ENCODE measurements at regions of chr17 and their contacts with region 1.

Region 1: DNA sequence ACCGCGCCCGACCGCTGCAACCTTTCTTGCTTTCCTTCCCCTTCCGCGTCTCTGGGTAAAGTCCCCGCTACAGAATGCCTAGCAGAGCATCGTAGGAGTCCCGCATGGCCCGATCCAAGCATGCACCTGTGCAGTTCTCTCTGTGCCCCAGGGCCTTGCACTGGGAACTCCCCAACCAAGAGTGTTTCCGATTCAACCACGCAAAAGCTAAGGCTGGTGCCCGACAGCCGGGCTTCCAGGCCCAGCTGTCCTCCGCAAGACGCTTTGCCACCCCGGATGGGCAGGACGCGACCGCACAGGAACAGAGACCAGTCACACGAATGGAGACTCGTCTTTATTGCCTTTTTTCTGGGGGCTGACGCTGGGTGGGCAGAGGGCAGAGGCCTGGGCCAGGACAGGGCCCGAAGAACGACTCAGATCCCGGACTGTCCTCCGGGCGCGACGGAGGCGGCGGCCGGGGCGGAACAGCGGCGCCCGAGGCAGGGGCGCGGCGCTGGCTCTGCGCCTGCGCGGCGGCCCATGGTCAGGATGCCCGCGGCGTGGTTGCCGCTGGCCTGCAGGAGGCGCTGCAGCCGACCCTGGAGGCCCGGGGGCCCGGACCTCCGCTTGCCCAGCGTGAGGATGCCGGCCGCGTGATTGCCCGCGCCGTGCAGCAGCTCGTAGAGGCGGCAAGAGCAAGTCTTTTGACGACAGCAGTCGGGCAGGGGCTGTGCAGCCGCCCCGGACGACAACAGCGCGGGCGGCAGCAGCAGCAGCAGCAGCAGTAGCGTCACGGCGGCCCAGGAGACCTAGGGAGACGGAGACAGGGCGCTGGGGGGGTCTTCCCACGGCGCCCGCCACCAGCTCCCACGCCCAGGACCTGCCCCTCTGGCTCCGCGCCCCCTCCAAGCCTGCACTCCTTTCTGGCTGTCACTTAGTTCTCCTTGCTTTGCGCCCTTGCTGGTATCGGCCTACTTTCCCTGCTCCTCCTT is 1.2 kb downstream of the HCRT start:
- DNase-seq: peak; percentile 67 to 92 (median 80)
- ATAC-seq: peak; percentile 41 to 89 (median 82)
- H3K4me3 ChIP-seq: peak overlapping the region; percentile 27 to 72 (median 61)
- H3K27ac ChIP-seq: peak overlapping the region in 11 of 12 donors; percentile 67 to 88 (median 80)
- H3K4me1 ChIP-seq: peaks cover 0 to 53% (median 27%) of the 10 kb centered on the region in 12 donors
- H3K27me3 ChIP-seq: peaks cover 0 to 28% (median 14%) of the 10 kb centered on the region in 9 donors
- CTCF ChIP-seq: peak; percentile 66 to 98 (median 88)
- POLR2A ChIP-seq: peak in 1 of 2 donors; percentile 65

Region 2: GRCh38 chr17:42120770-42121769 is 63.0 kb before region 1 on chr17 and contains the start of gene KAT2A:
- intact Hi-C with region 1: loop called in 5 of 10 experiments (anchors 2 to 5 kb)
- DNase-seq: peak; percentile 83 to 91 (median 86)
- ATAC-seq: peak; percentile 73 to 93 (median 92)
- H3K4me3 ChIP-seq: peak within 1 kb of the TSS; percentile 43 to 97 (median 78)
- H3K27ac ChIP-seq: peak within 1 kb of the TSS in 11 of 12 donors; percentile 24 to 80 (median 71)
- H3K4me1 ChIP-seq: peaks cover 0 to 29% (median 16%) of the 10 kb centered on the region in 12 donors
- H3K27me3 ChIP-seq: no peaks in the 10 kb centered on the region
- CTCF ChIP-seq: no peak
- POLR2A ChIP-seq: peak in 1 of 2 donors; percentile 51
- total RNA-seq, gene KAT2A: 6.9 to 17.6 (median 14.8) TPM

Region 3: DNA sequence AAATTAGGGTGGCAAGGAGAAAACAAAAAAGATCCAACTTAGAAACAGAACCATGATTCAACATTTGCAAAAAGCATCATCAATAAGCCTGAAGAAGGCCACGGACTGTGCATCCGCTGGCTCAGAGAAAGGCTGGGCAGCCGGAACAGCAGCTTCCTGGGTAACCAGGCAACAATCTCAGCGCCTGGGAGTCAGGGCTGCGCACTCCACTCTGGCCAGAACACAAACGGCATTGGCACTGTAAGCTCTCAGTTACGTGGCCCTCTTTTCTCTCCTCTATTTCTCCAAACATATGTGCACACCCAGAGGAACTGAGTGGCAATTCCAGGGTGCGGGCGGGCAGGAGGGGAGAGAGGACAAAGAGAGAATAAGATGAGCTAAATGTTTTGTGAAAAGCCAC is 16.7 kb after region 1 on chr17:
- intact Hi-C with region 1: no loop called
- DNase-seq: peak; percentile 57 to 82 (median 73)
- ATAC-seq: peak; percentile 88 to 96 (median 96)
- H3K4me3 ChIP-seq: no peak overlapping the region
- H3K27ac ChIP-seq: peak overlapping the region in 7 of 12 donors; percentile 12 to 50 (median 24)
- H3K4me1 ChIP-seq: peaks cover 0 to 14% (median 9%) of the 10 kb centered on the region in 12 donors
- H3K27me3 ChIP-seq: no peaks in the 10 kb centered on the region
- CTCF ChIP-seq: no peak
- POLR2A ChIP-seq: no peak

Region 4: GRCh38 chr17:42276359-42276608 is 92.3 kb after region 1 on chr17 and contains the start of gene STAT5B:
- intact Hi-C with region 1: loop called in 2 of 10 experiments (anchors 2 to 10 kb)
- DNase-seq: peak; percentile 72 to 89 (median 80)
- ATAC-seq: peak; percentile 40 to 90 (median 83)
- H3K4me3 ChIP-seq: peak within 1 kb of the TSS; percentile 70 to 99 (median 90)
- H3K27ac ChIP-seq: peak within 1 kb of the TSS; percentile 72 to 94 (median 90)
- H3K4me1 ChIP-seq: peaks cover 0 to 50% (median 25%) of the 10 kb centered on the region in 12 donors
- H3K27me3 ChIP-seq: no peaks in the 10 kb centered on the region
- CTCF ChIP-seq: no peak
- POLR2A ChIP-seq: peak in 1 of 2 donors; percentile 45
- total RNA-seq, gene STAT5B: 26.1 to 51.9 (median 32.4) TPM

Region 5: DNA sequence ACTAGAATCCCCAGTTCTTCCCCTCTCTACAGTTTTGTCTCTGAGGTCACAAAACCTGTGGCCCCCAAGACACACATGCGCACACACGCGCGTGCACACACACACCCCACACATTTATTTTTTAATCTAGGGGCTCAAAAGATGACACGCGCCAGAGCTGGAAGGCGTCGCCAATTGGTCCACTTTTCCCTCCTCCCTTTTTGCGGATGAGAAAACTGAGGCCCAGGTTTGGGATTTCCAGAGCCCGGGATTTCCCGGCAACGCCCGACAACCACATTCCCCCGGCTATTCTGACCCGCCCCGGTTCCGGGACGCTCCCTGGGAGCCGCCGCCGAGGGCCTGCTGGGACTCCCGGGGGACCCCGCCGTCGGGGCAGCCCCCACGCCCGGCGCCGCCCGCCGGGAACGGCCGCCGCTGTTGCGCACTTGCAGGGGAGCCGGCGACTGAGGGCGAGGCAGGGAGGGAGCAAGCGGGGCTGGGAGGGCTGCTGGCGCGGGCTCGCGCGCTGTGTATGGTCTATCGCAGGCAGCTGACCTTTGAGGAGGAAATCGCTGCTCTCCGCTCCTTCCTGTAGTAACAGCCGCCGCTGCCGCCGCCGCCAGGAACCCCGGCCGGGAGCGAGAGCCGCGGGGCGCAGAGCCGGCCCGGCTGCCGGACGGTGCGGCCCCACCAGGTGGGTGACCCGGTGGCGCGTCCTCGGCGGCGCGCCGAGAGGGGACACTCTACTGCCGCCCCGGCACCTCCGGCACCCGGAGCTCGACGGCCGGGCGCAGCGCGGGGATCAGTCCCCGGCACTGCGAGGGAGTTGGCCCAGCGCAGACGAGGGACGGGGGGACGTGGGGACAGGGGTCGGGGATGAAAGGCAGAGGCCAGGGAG is 104.1 kb after region 1 on chr17 and contains the start of gene STAT5A:
- intact Hi-C with region 1: no loop called
- DNase-seq: peak; percentile 92 to 95 (median 94)
- ATAC-seq: peak; percentile 82 to 94 (median 92)
- H3K4me3 ChIP-seq: peak within 1 kb of the TSS; percentile 58 to 93 (median 72)
- H3K27ac ChIP-seq: peak within 1 kb of the TSS; percentile 79 to 97 (median 91)
- H3K4me1 ChIP-seq: peaks cover 0 to 61% (median 29%) of the 10 kb centered on the region in 12 donors
- H3K27me3 ChIP-seq: no peaks in the 10 kb centered on the region
- CTCF ChIP-seq: peak in 1 of 12 donors; percentile 5
- POLR2A ChIP-seq: peak in 1 of 2 donors; percentile 83
- total RNA-seq, gene STAT5A: 7.5 to 44.0 (median 15.7) TPM

Region 6: DNA sequence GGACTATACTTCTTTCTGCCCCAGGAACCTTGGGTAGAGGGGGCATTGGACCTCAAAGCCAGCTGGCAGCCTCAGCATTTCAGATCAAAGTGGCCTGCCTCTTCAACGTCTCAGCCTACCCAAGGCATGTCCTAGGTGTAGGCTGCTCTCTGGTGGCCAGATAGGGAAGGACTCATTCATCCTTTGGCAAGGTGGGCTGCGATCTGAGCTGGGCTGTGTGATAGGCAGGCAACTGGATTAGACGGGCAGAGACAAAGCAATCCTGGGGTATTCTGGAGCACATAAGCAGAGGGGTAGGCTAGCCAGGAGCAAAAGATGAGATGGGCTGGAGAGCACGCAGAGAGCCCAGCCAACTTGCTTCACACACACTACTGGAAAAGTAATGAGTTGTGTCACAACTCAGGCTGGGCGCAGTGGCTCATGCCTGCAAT is 343.3 kb after region 1 on chr17:
- intact Hi-C with region 1: loop called in 2 of 10 experiments (anchors 5 kb)
- DNase-seq: peak in 4 of 5 donors; percentile 73 to 75 (median 74)
- ATAC-seq: peak; percentile 51 to 84 (median 82)
- H3K4me3 ChIP-seq: no peak overlapping the region
- H3K27ac ChIP-seq: peak overlapping the region in 8 of 12 donors; percentile 54 to 97 (median 74)
- H3K4me1 ChIP-seq: peaks cover 0 to 51% (median 32%) of the 10 kb centered on the region in 12 donors
- H3K27me3 ChIP-seq: no peaks in the 10 kb centered on the region
- CTCF ChIP-seq: peak; percentile 72 to 87 (median 81)
- POLR2A ChIP-seq: no peak